CD4-positive, alpha-beta T cell (primary cell): ENCODE measurements at regions of chr18 and their contacts with region 1.

Region 1: GRCh38 chr18:79378542-79379250 is 17.0 kb upstream of the NFATC1 start:
- DNase-seq: peak; percentile 71 to 92 (median 80)
- ATAC-seq: peak; percentile 96
- H3K4me3 ChIP-seq: no peak overlapping the region
- H3K4me3 Mint-ChIP-seq: no peak overlapping the region
- H3K27ac ChIP-seq: no peak overlapping the region
- H3K27ac Mint-ChIP-seq: no peak overlapping the region
- H3K4me1 ChIP-seq: peaks cover 12% of the 10 kb centered on the region
- H3K4me1 Mint-ChIP-seq: peaks cover 10% of the 10 kb centered on the region
- H3K27me3 ChIP-seq: no peaks in the 10 kb centered on the region
- H3K27me3 Mint-ChIP-seq: no peaks in the 10 kb centered on the region
- CTCF ChIP-seq: peak; percentile 97

Region 2: DNA sequence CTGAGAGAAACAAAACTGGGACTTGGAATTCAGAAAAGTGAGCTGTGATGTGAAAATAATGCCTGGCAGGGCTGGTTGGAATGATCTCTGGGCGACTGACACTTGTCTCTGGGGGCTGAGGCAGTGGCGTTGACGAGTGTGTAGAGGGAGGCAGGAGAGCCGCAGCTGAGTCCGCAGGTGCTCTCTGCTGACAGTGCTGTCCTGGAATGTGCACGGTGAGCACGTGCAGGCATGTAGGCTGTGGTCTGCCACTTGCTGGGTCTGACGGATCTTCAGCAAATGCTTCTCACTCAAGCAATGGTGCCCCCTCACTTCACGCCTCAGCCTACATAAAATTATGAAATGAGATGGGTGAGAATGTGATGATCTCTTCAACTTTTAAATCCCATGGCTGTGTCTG is 348.0 kb before region 1 on chr18:
- CTCF ChIA-PET with region 1: no interaction called
- POLR2A ChIA-PET with region 1: no interaction called
- intact Hi-C with region 1: no loop called
- DNase-seq: no peak
- ATAC-seq: no peak
- H3K4me3 ChIP-seq: no peak overlapping the region
- H3K4me3 Mint-ChIP-seq: no peak overlapping the region
- H3K27ac ChIP-seq: no peak overlapping the region
- H3K27ac Mint-ChIP-seq: no peak overlapping the region
- H3K4me1 ChIP-seq: no peaks in the 10 kb centered on the region
- H3K4me1 Mint-ChIP-seq: no peaks in the 10 kb centered on the region
- H3K27me3 ChIP-seq: no peaks in the 10 kb centered on the region
- H3K27me3 Mint-ChIP-seq: peaks cover 5% of the 10 kb centered on the region
- CTCF ChIP-seq: no peak

Region 3: GRCh38 chr18:79405781-79406575 is 27.3 kb after region 1 on chr18:
- CTCF ChIA-PET with region 1: interaction called, 6 read pairs
- POLR2A ChIA-PET with region 1: interaction called, 13 read pairs
- intact Hi-C with region 1: no loop called
- DNase-seq: peak; percentile 78 to 98 (median 86)
- ATAC-seq: peak; percentile 76
- H3K4me3 ChIP-seq: peak overlapping the region; percentile 40
- H3K4me3 Mint-ChIP-seq: peak overlapping the region; percentile 90
- H3K27ac ChIP-seq: peak overlapping the region; percentile 92 to 97
- H3K27ac Mint-ChIP-seq: peak overlapping the region; percentile 96
- H3K4me1 ChIP-seq: peaks cover 63% of the 10 kb centered on the region
- H3K4me1 Mint-ChIP-seq: peaks cover 56% of the 10 kb centered on the region
- H3K27me3 ChIP-seq: no peaks in the 10 kb centered on the region
- H3K27me3 Mint-ChIP-seq: no peaks in the 10 kb centered on the region
- CTCF ChIP-seq: peak; percentile 16

Region 4: DNA sequence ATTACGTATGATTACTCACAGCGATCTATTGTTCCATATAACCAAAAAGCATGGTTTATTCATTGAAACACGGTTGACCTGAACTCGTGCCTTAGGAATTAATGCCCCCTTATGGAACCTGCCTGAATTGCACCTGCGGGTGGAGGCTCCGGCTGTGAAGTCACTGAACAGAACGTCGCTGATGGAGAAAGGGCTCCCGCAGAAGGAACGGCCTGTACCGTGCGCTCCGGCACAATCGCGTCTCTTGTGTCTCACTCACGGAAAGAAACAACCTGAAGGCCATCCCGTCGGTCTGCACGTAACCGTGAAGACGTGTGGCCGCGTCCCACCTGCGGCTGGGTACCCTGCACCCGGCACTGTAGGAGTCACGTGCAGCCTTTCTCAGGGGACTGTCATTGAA is 150.2 kb after region 1 on chr18:
- CTCF ChIA-PET with region 1: interaction called, 14 read pairs
- POLR2A ChIA-PET with region 1: interaction called, 3 read pairs
- intact Hi-C with region 1: loop called (anchors 1 kb)
- DNase-seq: peak; percentile 62 to 86 (median 72)
- ATAC-seq: peak; percentile 49
- H3K4me3 ChIP-seq: no peak overlapping the region
- H3K4me3 Mint-ChIP-seq: peak overlapping the region; percentile 3
- H3K27ac ChIP-seq: no peak overlapping the region
- H3K27ac Mint-ChIP-seq: peak overlapping the region; percentile 57
- H3K4me1 ChIP-seq: peaks cover 26% of the 10 kb centered on the region
- H3K4me1 Mint-ChIP-seq: peaks cover 39% of the 10 kb centered on the region
- H3K27me3 ChIP-seq: peaks cover 0 to 5% of the 10 kb centered on the region in 2 experiments
- H3K27me3 Mint-ChIP-seq: no peaks in the 10 kb centered on the region
- CTCF ChIP-seq: peak; percentile 95

Region 5: DNA sequence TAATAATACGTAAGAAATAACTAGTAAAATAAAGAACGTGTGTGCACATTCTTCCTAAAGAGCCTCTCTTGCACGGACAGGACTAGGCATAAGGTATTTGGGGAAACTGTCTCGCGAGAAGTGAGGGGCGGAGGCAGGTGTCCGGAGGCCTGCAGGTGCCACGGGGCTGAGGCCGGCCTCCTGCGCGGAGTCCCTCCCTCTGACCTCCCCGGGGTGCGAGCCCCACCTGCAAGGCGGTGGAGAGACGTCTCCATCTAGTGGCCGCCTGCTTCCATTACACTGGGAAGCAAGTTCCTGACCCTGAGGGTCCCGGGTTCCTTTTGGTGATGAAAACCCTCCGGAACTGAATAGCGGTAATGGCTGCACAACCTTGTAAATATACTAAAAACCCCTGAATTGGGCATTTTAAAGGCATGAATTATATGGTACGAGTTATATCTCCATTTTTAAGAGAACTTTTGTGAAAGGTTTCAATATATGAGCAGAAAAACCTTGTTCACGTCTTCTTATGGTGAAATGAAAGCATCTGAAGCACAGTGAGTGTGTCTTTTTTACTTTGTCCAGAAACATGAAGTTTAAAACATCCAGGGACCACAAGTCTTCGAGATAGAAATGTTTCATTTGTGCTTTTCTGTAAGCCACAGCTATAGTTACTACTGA is 265.4 kb after region 1 on chr18:
- CTCF ChIA-PET with region 1: interaction called, 5 read pairs
- POLR2A ChIA-PET with region 1: no interaction called
- intact Hi-C with region 1: loop called (anchors 1 kb)
- DNase-seq: peak; percentile 44 to 80 (median 57)
- ATAC-seq: peak; percentile 80
- H3K4me3 ChIP-seq: no peak overlapping the region
- H3K4me3 Mint-ChIP-seq: no peak overlapping the region
- H3K27ac ChIP-seq: no peak overlapping the region
- H3K27ac Mint-ChIP-seq: no peak overlapping the region
- H3K4me1 ChIP-seq: peaks cover 18% of the 10 kb centered on the region
- H3K4me1 Mint-ChIP-seq: peaks cover 8% of the 10 kb centered on the region
- H3K27me3 ChIP-seq: peaks cover 0 to 6% of the 10 kb centered on the region in 2 experiments
- H3K27me3 Mint-ChIP-seq: peaks cover 18% of the 10 kb centered on the region
- CTCF ChIP-seq: peak; percentile 99

Region 6: GRCh38 chr18:80244956-80245730 is 866.4 kb after region 1 on chr18:
- CTCF ChIA-PET with region 1: no interaction called
- POLR2A ChIA-PET with region 1: no interaction called
- intact Hi-C with region 1: no loop called
- DNase-seq: no peak
- ATAC-seq: no peak
- H3K4me3 ChIP-seq: no peak overlapping the region
- H3K4me3 Mint-ChIP-seq: peak overlapping the region; percentile 58
- H3K27ac ChIP-seq: no peak overlapping the region
- H3K27ac Mint-ChIP-seq: no peak overlapping the region
- H3K4me1 ChIP-seq: peaks cover 13% of the 10 kb centered on the region
- H3K4me1 Mint-ChIP-seq: no peaks in the 10 kb centered on the region
- H3K27me3 ChIP-seq: peaks cover 24 to 44% of the 10 kb centered on the region in 2 experiments
- H3K27me3 Mint-ChIP-seq: peaks cover 83% of the 10 kb centered on the region
- CTCF ChIP-seq: no peak